Left colon (tissue), 2 donors: ENCODE measurements at regions of chr7 and their contacts with region 1.

Region 1: DNA sequence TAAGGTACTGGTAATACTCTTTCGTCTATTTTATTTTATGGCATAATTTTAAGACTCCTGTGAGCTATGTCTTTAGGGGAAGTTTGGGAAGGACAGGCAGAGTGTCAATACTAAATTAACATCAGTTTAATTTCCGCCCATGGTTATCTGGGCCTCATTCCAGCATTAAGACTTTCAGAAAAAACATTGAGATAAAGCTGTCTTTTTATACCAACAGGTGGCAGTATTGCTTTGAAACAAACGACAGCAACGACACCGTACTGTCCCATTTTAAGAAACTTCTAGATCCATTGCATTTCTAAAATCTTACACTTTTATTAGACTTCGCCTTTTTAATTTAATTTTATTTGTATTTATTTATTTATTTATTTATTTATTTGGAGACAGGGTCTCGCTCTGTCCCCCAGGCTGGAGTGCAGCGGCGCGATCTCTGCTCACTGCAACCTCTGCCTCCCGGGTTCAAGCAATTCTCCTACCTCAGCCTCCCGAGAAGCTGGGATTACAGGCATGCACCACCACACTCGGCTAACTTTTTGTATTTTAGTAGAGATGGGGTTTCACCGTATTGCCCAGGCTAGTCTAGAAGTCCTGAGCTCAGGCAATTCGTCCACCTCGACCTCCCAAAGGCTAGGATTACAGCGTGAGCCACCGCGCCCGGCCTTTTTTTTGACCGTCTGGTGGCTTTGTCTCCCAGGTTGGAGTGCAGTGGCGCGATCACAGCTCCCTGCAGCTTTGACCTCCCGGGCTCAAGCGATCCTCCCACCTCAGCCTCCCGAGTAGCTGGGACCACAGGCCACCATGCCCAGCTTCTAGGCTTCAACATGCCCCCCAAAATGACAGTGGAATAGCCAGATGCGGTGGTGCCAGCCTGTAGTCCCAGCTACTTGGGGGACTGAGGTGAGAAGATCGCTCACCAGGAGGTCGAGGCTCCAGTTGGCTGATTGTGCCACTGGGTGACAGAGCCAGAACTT is 78.7 kb upstream of the C1GALT1 start:
- DNase-seq: peak in 1 of 2 donors; percentile 10
- ATAC-seq: peak; percentile 88

Region 2: GRCh38 chr7:7257899-7258692 is 154.5 kb after region 1 on chr7:
- intact Hi-C with region 1: no loop called
- DNase-seq: no peak
- ATAC-seq: peak; percentile 27

Region 3: DNA sequence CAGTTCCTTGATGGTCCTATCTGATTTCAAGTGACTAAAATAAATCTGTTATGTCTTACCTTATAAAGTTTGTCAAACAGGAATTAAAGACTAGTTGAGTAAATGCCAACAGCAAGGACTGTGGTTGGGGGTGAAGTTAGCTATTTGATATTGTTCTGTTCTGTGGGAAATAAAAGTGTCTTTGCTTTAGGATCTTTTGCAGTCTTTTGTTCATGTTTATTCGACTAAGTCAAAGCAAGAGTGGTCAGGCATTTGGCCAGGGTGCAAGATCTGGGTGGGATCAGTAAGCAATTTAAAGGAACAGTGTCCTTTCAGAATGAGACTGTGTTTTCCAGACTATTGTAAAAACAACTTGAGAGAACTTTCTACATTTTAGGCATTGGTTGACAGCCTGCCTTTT is 432.1 kb after region 1 on chr7 and contains the start of gene COL28A1:
- intact Hi-C with region 1: loop called in 1 of 2 experiments (anchors 5 kb)
- DNase-seq: no peak
- ATAC-seq: no peak
- total RNA-seq, gene COL28A1: 3.2 to 5.1 TPM